WTC11 (cell line): ENCODE measurements at regions of chr15 and their contacts with region 1.

Region 1: GRCh38 chr15:51401872-51402517 is 60.5 kb downstream of the GLDN start:
- DNase-seq: peak; percentile 76
- ATAC-seq: peak; percentile 79
- H3K4me3 Mint-ChIP-seq: no peak overlapping the region
- H3K27ac Mint-ChIP-seq: no peak overlapping the region
- H3K4me1 Mint-ChIP-seq: peaks cover 14% of the 10 kb centered on the region
- H3K27me3 Mint-ChIP-seq: peaks cover 3% of the 10 kb centered on the region; the same call in 1 of the 2 replicates
- CTCF ChIP-seq: peak; percentile 64

Region 2: GRCh38 chr15:51132384-51133139 is 269.4 kb before region 1 on chr15:
- CTCF ChIA-PET with region 1: interaction called, 11 read pairs
- POLR2A ChIA-PET with region 1: no interaction called
- DNase-seq: peak; percentile 56
- ATAC-seq: peak; percentile 92
- H3K4me3 Mint-ChIP-seq: no peak overlapping the region
- H3K27ac Mint-ChIP-seq: peak overlapping the region; percentile 16; the same call in 1 of the 2 replicates
- H3K4me1 Mint-ChIP-seq: peaks cover 9% of the 10 kb centered on the region
- H3K27me3 Mint-ChIP-seq: no peaks in the 10 kb centered on the region
- CTCF ChIP-seq: peak; percentile 89

Region 3: GRCh38 chr15:51227940-51228783 is 173.8 kb before region 1 on chr15:
- CTCF ChIA-PET with region 1: interaction called, 15 read pairs
- POLR2A ChIA-PET with region 1: no interaction called
- DNase-seq: no peak
- ATAC-seq: peak; percentile 42
- H3K4me3 Mint-ChIP-seq: no peak overlapping the region
- H3K27ac Mint-ChIP-seq: peak overlapping the region; percentile 2
- H3K4me1 Mint-ChIP-seq: peaks cover 10% of the 10 kb centered on the region
- H3K27me3 Mint-ChIP-seq: no peaks in the 10 kb centered on the region
- CTCF ChIP-seq: no peak

Region 4: DNA sequence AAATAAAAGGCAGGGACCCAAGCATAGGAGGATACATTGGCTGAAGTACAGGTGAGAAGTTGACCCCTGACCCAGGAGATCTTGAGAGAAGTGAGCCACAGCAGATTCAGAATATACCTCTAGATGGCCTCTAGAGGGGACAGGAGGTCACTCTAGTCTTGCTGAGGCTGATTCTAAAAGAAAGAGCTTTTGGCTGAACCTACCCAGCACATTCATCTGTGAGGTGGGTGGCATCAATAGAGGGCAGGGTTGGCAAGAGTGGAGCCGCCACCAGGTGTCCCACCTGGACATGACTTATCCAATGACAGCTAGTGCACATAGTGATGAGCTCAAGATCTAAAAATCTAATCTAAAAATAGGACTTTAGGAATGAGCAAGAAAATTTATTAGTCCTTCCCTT is 115.2 kb before region 1 on chr15:
- CTCF ChIA-PET with region 1: interaction called, 15 read pairs
- POLR2A ChIA-PET with region 1: no interaction called
- DNase-seq: no peak
- ATAC-seq: peak; percentile 74
- H3K4me3 Mint-ChIP-seq: no peak overlapping the region
- H3K27ac Mint-ChIP-seq: no peak overlapping the region
- H3K4me1 Mint-ChIP-seq: no peaks in the 10 kb centered on the region
- H3K27me3 Mint-ChIP-seq: no peaks in the 10 kb centered on the region; the same call in 1 of the 2 replicates
- CTCF ChIP-seq: no peak

Region 5: GRCh38 chr15:51363383-51363782 is 38.6 kb before region 1 on chr15:
- CTCF ChIA-PET with region 1: interaction called, 10 read pairs
- POLR2A ChIA-PET with region 1: no interaction called
- DNase-seq: no peak
- ATAC-seq: peak; percentile 47
- H3K4me3 Mint-ChIP-seq: no peak overlapping the region
- H3K27ac Mint-ChIP-seq: no peak overlapping the region
- H3K4me1 Mint-ChIP-seq: no peaks in the 10 kb centered on the region
- H3K27me3 Mint-ChIP-seq: no peaks in the 10 kb centered on the region
- CTCF ChIP-seq: no peak

Region 6: GRCh38 chr15:51380999-51381795 is 20.8 kb before region 1 on chr15:
- CTCF ChIA-PET with region 1: interaction called, 51 read pairs
- POLR2A ChIA-PET with region 1: no interaction called
- DNase-seq: peak; percentile 60
- ATAC-seq: peak; percentile 93
- H3K4me3 Mint-ChIP-seq: no peak overlapping the region
- H3K27ac Mint-ChIP-seq: no peak overlapping the region
- H3K4me1 Mint-ChIP-seq: peaks cover 4% of the 10 kb centered on the region
- H3K27me3 Mint-ChIP-seq: peaks cover 2% of the 10 kb centered on the region; the same call in 1 of the 2 replicates
- CTCF ChIP-seq: peak; percentile 80

Region 7: GRCh38 chr15:51414257-51415044 is 12.5 kb after region 1 on chr15:
- CTCF ChIA-PET with region 1: interaction called, 30 read pairs
- POLR2A ChIA-PET with region 1: no interaction called
- DNase-seq: no peak
- ATAC-seq: no peak
- H3K4me3 Mint-ChIP-seq: no peak overlapping the region
- H3K27ac Mint-ChIP-seq: no peak overlapping the region
- H3K4me1 Mint-ChIP-seq: peaks cover 22% of the 10 kb centered on the region
- H3K27me3 Mint-ChIP-seq: no peaks in the 10 kb centered on the region
- CTCF ChIP-seq: no peak

Region 8: DNA sequence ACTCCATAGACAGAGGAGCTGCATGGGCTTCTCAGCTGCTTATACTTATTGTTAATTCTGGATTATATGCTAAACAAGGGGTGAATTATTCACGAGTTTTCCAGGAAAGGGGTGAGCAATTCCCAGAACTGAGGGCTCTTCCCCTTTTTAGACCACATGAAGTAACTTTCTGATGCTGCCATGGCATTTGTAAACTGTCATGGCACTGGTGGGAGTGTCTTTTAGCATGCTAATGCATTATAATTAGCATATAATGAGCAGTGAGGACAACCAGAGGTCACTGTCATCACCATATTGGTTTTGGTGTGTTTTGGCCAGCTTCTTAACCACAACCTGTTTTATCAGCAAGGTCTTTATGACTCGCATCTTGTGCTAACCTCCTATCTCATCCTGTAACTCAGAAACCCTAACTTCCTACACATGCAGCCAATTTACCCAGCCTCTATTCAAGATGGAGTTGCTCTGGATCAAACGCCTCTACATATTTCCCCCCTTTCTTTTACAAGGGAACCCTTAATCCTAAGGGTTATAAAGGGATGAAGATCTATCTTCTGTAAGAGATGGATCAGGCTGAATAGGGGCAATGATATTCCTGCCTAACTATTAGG is 232.7 kb after region 1 on chr15:
- CTCF ChIA-PET with region 1: no interaction called
- POLR2A ChIA-PET with region 1: no interaction called
- DNase-seq: no peak
- ATAC-seq: no peak
- H3K4me3 Mint-ChIP-seq: no peak overlapping the region
- H3K27ac Mint-ChIP-seq: no peak overlapping the region
- H3K4me1 Mint-ChIP-seq: no peaks in the 10 kb centered on the region
- H3K27me3 Mint-ChIP-seq: peaks cover 60% of the 10 kb centered on the region
- CTCF ChIP-seq: no peak